Activated T-helper 2 cell treated with anti-CD3 and anti-CD28 coated beads, Interferon-gamma antibody, Interleukin-2, Interleukin-4, amounts not matched to agents 10 μg/mL and 5 μg/mL and 100 μg/mL, durations not matched to agents 14 hours and 24 hours and 36 hours (primary cell): ENCODE measurements at regions of chr3 and their contacts with region 1.

Region 1: GRCh38 chr3:59444294-59444671 is 394.5 kb upstream of the CFAP20DC start:
- DNase-seq: peak; percentile 22
- H3K4me3 Mint-ChIP-seq: peak overlapping the region; percentile 57
- H3K27ac Mint-ChIP-seq: peak overlapping the region; percentile 76
- H3K4me1 Mint-ChIP-seq: peaks cover 51% of the 10 kb centered on the region
- H3K27me3 Mint-ChIP-seq: no peaks in the 10 kb centered on the region

Region 2: GRCh38 chr3:59133311-59133710 is 311.0 kb before region 1 on chr3:
- intact Hi-C with region 1: no loop called
- DNase-seq: no peak
- H3K4me3 Mint-ChIP-seq: no peak overlapping the region
- H3K27ac Mint-ChIP-seq: no peak overlapping the region
- H3K4me1 Mint-ChIP-seq: no peaks in the 10 kb centered on the region
- H3K27me3 Mint-ChIP-seq: peaks cover 11% of the 10 kb centered on the region

Region 3: DNA sequence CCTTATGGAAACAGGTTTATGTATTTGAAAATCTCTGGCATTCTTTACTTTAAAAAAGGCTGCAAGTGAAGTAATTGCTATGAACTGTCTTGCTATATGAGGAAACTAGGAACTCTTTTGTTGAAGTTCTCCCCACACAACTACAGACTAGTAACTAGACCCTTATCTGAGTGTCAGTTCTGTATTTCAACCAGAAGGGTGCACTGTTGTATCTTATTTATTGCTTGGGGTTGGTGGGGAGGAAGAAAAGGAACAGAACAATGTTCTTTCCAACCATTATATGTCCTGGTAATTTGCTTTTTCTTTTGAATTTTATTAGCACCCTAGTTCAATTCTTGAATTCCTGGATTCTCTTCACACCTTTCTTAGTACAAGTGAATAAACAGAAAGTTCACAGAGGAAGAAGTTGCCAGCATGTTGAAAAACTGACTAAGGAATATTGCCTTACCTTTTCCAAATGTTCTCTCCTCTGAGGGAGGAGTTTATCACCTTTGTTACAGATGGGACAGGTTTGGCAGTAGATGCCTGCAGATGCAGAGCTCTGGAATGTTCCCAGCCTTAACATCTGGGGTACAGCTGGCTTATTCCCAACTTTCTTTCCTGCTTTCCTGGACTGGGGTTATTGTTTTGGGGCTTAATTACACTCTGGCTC is 232.0 kb before region 1 on chr3:
- intact Hi-C with region 1: loop called (anchors 10 kb)
- DNase-seq: no peak
- H3K4me3 Mint-ChIP-seq: no peak overlapping the region
- H3K27ac Mint-ChIP-seq: no peak overlapping the region
- H3K4me1 Mint-ChIP-seq: no peaks in the 10 kb centered on the region
- H3K27me3 Mint-ChIP-seq: peaks cover 12% of the 10 kb centered on the region

Region 4: DNA sequence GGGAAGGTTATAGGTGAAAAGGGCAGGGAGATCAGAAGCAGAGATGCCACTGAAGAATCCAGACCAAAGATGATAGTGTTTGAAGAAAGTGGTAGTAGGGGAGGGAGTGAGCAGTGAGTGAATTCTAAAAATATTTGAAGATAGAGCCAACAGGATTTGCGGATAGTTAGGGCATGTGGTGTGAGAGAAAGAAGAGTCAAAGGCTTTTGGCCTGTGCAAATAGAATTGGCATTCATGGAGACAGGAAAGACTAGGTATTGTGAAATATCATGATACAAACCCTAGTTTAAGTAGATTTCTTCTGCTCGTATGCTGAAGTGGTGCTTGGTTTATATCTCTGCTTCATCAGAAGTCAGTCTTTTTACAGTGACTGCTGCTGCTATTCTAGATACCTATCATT is 170.3 kb before region 1 on chr3:
- intact Hi-C with region 1: no loop called
- DNase-seq: no peak
- H3K4me3 Mint-ChIP-seq: no peak overlapping the region
- H3K27ac Mint-ChIP-seq: no peak overlapping the region
- H3K4me1 Mint-ChIP-seq: no peaks in the 10 kb centered on the region
- H3K27me3 Mint-ChIP-seq: peaks cover 3% of the 10 kb centered on the region

Region 5: GRCh38 chr3:59308684-59309083 is 135.6 kb before region 1 on chr3:
- intact Hi-C with region 1: no loop called
- DNase-seq: no peak
- H3K4me3 Mint-ChIP-seq: no peak overlapping the region
- H3K27ac Mint-ChIP-seq: no peak overlapping the region
- H3K4me1 Mint-ChIP-seq: peaks cover 6% of the 10 kb centered on the region
- H3K27me3 Mint-ChIP-seq: peaks cover 10% of the 10 kb centered on the region

Region 6: GRCh38 chr3:59426821-59427565 is 17.3 kb before region 1 on chr3:
- intact Hi-C with region 1: loop called (anchors 1 kb)
- DNase-seq: no peak
- H3K4me3 Mint-ChIP-seq: no peak overlapping the region
- H3K27ac Mint-ChIP-seq: peak overlapping the region; percentile 46
- H3K4me1 Mint-ChIP-seq: peaks cover 46% of the 10 kb centered on the region
- H3K27me3 Mint-ChIP-seq: no peaks in the 10 kb centered on the region

Region 7: GRCh38 chr3:59469948-59470723 is 25.9 kb after region 1 on chr3:
- intact Hi-C with region 1: loop called (anchors 1 kb)
- DNase-seq: peak; percentile 23
- H3K4me3 Mint-ChIP-seq: no peak overlapping the region
- H3K27ac Mint-ChIP-seq: peak overlapping the region; percentile 40
- H3K4me1 Mint-ChIP-seq: peaks cover 43% of the 10 kb centered on the region
- H3K27me3 Mint-ChIP-seq: no peaks in the 10 kb centered on the region